Psoas muscle (tissue), 8 donors: ENCODE measurements at regions of chr22 and their contacts with region 1.

Region 1: DNA sequence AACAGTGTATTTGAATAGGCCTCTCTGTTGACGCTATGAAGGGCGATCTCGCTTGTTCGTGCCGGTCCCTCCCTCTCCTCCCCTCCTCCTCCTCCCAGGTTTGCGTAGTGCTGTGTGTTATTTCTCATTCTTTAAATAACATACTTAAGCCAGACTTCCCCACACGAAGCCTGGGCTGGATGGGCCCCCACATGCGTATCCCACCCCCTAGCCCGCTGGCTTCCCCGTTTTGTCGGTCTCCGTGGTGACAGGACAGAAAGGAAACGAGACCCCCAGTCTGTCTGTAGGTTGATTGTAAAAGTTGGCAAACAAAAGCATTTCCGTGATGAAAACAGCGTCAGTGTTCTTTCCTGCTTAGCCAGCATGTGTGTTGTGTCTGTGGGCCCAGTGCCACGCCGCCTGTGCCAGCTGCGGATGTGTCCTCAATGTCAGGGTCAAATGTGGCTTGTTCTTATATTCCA is 27.3 kb downstream of the FAM118A start:
- DNase-seq: peak; percentile 79 to 88
- ATAC-seq: peak; percentile 27 to 62 (median 54)
- H3K4me3 ChIP-seq: no peak overlapping the region
- H3K27ac ChIP-seq: peak overlapping the region; percentile 89
- H3K4me1 ChIP-seq: peaks cover 47% of the 10 kb centered on the region
- H3K27me3 ChIP-seq: no peaks in the 10 kb centered on the region
- CTCF ChIP-seq: no peak

Region 2: DNA sequence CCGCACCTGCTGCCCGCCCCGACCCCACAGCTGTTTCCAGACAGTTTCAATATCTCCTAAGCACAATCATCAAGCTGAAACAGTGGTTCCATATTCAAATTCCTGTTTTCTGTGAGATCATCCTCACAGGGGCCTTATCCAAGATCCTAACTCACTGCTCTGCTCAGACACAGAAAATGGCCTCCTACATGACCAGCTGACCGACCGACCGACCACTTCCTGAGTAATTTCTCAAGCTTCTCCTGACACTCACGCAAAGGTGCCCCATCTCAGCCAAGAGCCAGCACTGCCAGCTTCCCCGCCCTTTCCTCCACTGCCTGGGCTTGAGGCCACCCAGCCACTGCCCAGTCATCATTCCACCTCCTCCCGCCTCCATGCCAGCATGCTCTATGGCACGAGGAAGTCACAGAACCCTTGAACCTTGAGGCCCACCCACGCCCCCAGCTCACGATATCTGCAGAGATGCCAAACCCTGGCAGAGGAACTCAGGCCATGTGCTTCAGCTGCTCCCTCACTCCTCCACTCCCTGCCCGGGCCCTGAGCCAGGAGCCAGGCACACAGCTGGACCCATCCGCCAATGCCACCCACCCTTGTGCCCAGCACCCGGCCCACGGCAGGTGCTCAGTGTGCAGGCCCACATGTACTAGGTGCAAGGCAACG is 110.3 kb before region 1 on chr22:
- intact Hi-C with region 1: no loop called
- DNase-seq: peak in 1 of 2 donors; percentile 58
- ATAC-seq: peak; percentile 28 to 59 (median 33)
- H3K4me3 ChIP-seq: no peak overlapping the region
- H3K27ac ChIP-seq: no peak overlapping the region
- H3K4me1 ChIP-seq: no peaks in the 10 kb centered on the region
- H3K27me3 ChIP-seq: no peaks in the 10 kb centered on the region
- CTCF ChIP-seq: no peak

Region 3: GRCh38 chr22:45366713-45367112 is 29.7 kb after region 1 on chr22:
- intact Hi-C with region 1: no loop called
- DNase-seq: no peak
- ATAC-seq: no peak
- H3K4me3 ChIP-seq: no peak overlapping the region
- H3K27ac ChIP-seq: no peak overlapping the region
- H3K4me1 ChIP-seq: no peaks in the 10 kb centered on the region
- H3K27me3 ChIP-seq: no peaks in the 10 kb centered on the region
- CTCF ChIP-seq: no peak

Region 4: GRCh38 chr22:45435544-45436139 is 98.6 kb after region 1 on chr22:
- intact Hi-C with region 1: loop called in 1 of 2 experiments (anchors 5 kb)
- DNase-seq: peak; percentile 87 to 91
- ATAC-seq: peak; percentile 93 to 99 (median 96)
- H3K4me3 ChIP-seq: peak overlapping the region; percentile 33
- H3K27ac ChIP-seq: no peak overlapping the region
- H3K4me1 ChIP-seq: no peaks in the 10 kb centered on the region
- H3K27me3 ChIP-seq: no peaks in the 10 kb centered on the region
- CTCF ChIP-seq: peak; percentile 97